ENCODE measurements at regions of chr9 and their contacts with region 1.

Region 1: DNA sequence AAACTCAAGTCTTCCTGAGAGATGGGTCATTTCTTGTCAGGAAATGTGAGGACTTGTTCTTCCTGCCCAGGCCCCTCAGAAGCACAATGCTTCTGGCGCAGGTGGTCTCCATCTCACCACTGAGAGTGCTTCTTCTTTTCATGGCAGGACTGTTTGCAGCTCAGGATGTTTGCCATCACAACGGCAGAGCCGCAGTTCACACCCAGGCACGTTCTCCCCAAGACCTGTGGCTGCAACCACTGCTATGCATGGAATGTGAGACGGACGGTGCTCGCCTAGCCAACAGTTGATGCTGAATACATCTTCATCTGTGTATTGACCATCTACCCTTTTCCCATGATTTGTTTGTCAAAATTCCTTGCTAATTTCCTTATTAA is 216.3 kb downstream of the GADD45G start:
- DNase-seq: no peak
- ATAC-seq: no peak
- H3K4me3 ChIP-seq: no peak overlapping the region
- H3K4me3 Mint-ChIP-seq: no peak overlapping the region
- H3K27ac ChIP-seq: no peak overlapping the region
- H3K27ac Mint-ChIP-seq: no peak overlapping the region
- H3K4me1 ChIP-seq: no peaks in the 10 kb centered on the region
- H3K4me1 Mint-ChIP-seq: no peaks in the 10 kb centered on the region
- H3K27me3 ChIP-seq: no peaks in the 10 kb centered on the region
- H3K27me3 Mint-ChIP-seq: no peaks in the 10 kb centered on the region
- CTCF ChIP-seq: no peak

Region 2: GRCh38 chr9:89778100-89779090 is 42.7 kb before region 1 on chr9:
- CTCF ChIA-PET with region 1: no interaction called
- POLR2A ChIA-PET with region 1: no interaction called
- intact Hi-C with region 1: no loop called
- DNase-seq: no peak
- ATAC-seq: no peak
- H3K4me3 ChIP-seq: no peak overlapping the region
- H3K4me3 Mint-ChIP-seq: no peak overlapping the region
- H3K27ac ChIP-seq: no peak overlapping the region
- H3K27ac Mint-ChIP-seq: no peak overlapping the region
- H3K4me1 ChIP-seq: no peaks in the 10 kb centered on the region
- H3K4me1 Mint-ChIP-seq: no peaks in the 10 kb centered on the region
- H3K27me3 ChIP-seq: no peaks in the 10 kb centered on the region
- H3K27me3 Mint-ChIP-seq: peaks cover 4% of the 10 kb centered on the region
- CTCF ChIP-seq: no peak

Region 3: DNA sequence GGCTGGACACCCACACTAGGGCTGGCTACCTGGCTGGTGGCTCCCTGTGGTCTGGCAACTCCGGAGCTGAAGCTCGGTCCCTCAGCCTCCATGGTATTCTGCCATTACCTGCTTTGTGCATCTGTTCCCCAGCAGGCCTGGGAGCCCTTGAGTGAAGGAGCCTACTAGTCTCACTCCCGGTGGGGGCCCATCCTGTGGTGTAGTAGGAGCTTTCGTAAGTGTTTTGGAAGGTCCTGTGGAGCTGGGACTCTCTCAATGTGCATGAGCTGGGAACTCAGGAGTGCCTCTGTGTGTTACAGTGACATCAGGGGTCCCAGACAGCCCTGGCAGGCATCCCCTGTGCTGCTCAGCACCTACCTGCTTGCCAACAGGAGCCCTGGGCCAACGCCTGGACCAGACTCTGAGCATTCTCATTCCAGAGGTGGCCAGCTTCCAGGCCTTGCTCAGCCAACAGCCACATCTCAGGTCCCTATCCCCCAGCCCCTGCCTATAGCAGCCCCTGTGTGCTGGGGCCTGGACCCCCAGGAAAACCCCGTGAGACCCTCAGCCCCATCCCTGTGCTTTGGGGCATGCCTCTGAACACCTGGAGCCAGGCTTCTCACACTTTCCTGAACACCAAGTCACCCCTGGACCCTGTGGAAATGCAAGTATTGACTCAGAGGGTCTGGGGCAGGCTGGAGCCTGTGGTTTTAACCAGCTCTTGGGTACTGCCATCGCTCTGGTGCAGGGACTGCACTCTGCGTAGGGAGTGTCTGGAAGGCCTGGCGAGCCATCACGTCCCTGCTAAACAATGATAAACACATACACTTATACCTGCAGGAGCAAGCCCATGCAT is 51.0 kb after region 1 on chr9:
- CTCF ChIA-PET with region 1: no interaction called
- POLR2A ChIA-PET with region 1: no interaction called
- intact Hi-C with region 1: loop called in 1 of 2 experiments (anchors 2 kb)
- DNase-seq: no peak
- ATAC-seq: no peak
- H3K4me3 ChIP-seq: no peak overlapping the region
- H3K4me3 Mint-ChIP-seq: no peak overlapping the region
- H3K27ac ChIP-seq: no peak overlapping the region
- H3K27ac Mint-ChIP-seq: no peak overlapping the region
- H3K4me1 ChIP-seq: no peaks in the 10 kb centered on the region
- H3K4me1 Mint-ChIP-seq: no peaks in the 10 kb centered on the region
- H3K27me3 ChIP-seq: no peaks in the 10 kb centered on the region
- H3K27me3 Mint-ChIP-seq: no peaks in the 10 kb centered on the region
- CTCF ChIP-seq: no peak

Measured in CD8-positive, alpha-beta T cell (primary cell).